Endothelial cell of umbilical vein (primary cell): ENCODE measurements at regions of chr17 and their contacts with region 1.

Region 1: GRCh38 chr17:64736804-64737492 is 74.8 kb upstream of the SMURF2 start:
- DNase-seq: peak; percentile 75
- H3K4me3 ChIP-seq: no peak overlapping the region
- H3K27ac ChIP-seq: no peak overlapping the region
- H3K4me1 ChIP-seq: peaks cover 42% of the 10 kb centered on the region
- H3K27me3 ChIP-seq: no peaks in the 10 kb centered on the region
- CTCF ChIP-seq: peak; percentile 66 to 71
- POLR2A ChIP-seq: no peak

Region 2: GRCh38 chr17:64506576-64507477 is 230.1 kb before region 1 on chr17 and contains the start of gene CEP95:
- CTCF ChIA-PET with region 1: no interaction called
- POLR2A ChIA-PET with region 1: interaction called, 3 read pairs
- dilution Hi-C with region 1: no loop called
- intact Hi-C with region 1: loop called (anchors 10 kb)
- DNase-seq: peak; percentile 96
- H3K4me3 ChIP-seq: peak within 1 kb of the TSS; percentile 65 to 97 (median 95)
- H3K27ac ChIP-seq: peak within 1 kb of the TSS; percentile 98
- H3K4me1 ChIP-seq: peaks cover 34% of the 10 kb centered on the region
- H3K27me3 ChIP-seq: no peaks in the 10 kb centered on the region
- CTCF ChIP-seq: no peak
- POLR2A ChIP-seq: peak; percentile 65
- total RNA-seq, gene CEP95: 35.5 and 42.6 TPM in 2 replicates

Region 3: DNA sequence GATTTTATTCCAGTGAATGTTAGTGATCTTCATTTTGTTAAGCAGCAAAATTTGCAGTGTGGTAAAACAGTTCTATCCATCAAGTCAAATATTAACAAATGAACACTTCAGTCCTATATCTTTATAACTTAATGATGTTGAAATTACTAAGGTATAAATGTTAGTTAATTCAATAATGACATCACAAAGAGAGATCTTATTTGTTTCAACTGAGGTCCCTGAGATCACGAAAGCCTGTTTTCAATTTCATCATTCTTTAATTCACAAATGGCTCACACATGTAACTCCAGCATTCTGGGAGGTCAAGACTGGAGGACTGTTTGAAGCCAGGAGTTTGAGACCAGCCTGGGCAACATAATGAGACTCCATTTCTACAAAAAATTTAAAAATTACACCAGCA is 88.7 kb before region 1 on chr17:
- CTCF ChIA-PET with region 1: interaction called, 16 read pairs
- POLR2A ChIA-PET with region 1: interaction called, 3 read pairs
- dilution Hi-C with region 1: no loop called
- intact Hi-C with region 1: loop called (anchors 1 kb)
- DNase-seq: no peak
- H3K4me3 ChIP-seq: no peak overlapping the region
- H3K27ac ChIP-seq: no peak overlapping the region
- H3K4me1 ChIP-seq: peaks cover 24% of the 10 kb centered on the region
- H3K27me3 ChIP-seq: no peaks in the 10 kb centered on the region
- CTCF ChIP-seq: no peak
- POLR2A ChIP-seq: no peak

Region 4: DNA sequence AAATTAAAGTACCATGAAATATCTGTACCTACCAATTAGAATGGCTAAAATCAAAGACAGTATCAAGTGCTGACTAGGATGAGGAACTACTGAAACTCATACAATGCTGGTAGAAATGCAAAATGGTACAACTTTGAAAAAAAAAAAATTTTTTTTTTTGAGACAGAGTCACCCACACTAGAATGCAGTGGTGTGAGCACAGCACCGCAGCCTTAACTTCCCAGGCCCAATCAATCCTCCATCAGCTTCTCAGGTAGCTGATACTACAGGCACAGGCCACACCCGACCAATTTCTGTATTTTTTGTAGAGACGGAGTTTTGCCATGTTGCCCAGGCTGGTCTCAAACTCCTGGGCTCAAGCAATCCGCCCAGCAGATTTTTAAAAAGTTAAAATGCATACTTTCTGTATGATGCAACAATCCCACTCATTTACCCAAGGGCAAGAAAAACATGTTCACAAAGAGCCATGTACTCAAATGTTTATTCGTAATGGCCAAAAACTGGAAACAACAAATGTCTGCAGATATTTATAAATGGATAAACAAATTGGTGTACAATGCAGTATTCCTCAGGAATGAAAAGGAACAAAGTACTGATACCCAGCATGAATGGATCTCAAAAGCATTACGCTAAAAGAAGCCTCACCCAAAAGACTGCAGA is 83.5 kb before region 1 on chr17:
- CTCF ChIA-PET with region 1: interaction called, 16 read pairs
- POLR2A ChIA-PET with region 1: interaction called, 3 read pairs
- dilution Hi-C with region 1: no loop called
- intact Hi-C with region 1: loop called (anchors 1 kb)
- DNase-seq: no peak
- H3K4me3 ChIP-seq: no peak overlapping the region
- H3K27ac ChIP-seq: peak overlapping the region; percentile 26
- H3K4me1 ChIP-seq: peaks cover 48% of the 10 kb centered on the region
- H3K27me3 ChIP-seq: no peaks in the 10 kb centered on the region
- CTCF ChIP-seq: no peak
- POLR2A ChIP-seq: no peak

Region 5: DNA sequence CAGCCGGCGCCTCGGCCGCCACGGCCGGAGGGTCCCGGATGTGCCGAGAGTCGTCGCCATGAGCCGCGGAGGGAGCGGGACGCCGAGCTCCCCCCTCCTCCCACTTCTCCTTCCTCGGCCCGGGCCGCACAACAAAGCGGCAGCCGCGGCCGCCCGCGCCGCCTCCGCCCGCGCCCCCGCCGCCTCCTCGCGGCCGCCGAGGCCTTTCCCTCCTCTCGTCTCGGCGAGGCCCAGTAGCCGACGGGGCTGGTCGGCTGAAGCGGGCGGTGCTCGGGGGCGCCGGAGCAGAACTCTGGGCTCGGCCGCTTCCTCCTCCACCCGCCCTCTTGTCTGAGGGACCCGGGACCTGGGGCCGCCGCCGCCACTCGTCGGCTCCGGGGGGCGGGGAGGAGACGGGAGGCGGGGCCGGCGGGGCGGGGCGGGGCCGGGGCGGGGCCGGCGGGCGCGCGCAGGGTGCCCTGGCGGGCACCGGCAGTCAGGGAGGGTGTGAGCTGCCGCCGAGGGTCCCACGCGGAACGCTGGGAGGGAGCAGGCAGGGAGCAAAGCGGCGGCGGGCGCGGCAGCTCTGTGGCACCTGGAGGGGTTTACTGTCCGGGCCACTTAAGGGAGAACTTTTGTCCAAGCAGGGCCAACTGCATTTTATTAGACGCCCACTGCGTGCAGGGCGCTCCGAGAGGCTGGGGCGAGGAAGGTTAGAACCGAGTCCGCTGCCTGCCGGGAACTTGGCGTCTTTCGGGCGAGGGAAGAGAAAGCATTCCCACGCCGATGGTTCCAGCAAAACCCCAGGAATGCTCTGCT is 74.8 kb before region 1 on chr17 and contains the start of gene SMURF2:
- CTCF ChIA-PET with region 1: interaction called, 8 read pairs
- POLR2A ChIA-PET with region 1: no interaction called
- dilution Hi-C with region 1: no loop called
- intact Hi-C with region 1: loop called (anchors 1 kb)
- DNase-seq: peak; percentile 68
- H3K4me3 ChIP-seq: peak within 1 kb of the TSS; percentile 92 to 97 (median 95)
- H3K27ac ChIP-seq: peak within 1 kb of the TSS; percentile 86
- H3K4me1 ChIP-seq: peaks cover 29% of the 10 kb centered on the region
- H3K27me3 ChIP-seq: no peaks in the 10 kb centered on the region
- CTCF ChIP-seq: no peak
- POLR2A ChIP-seq: peak; percentile 97
- total RNA-seq, gene SMURF2: 105 and 108 TPM in 2 replicates

Region 6: GRCh38 chr17:64687961-64688360 is 49.0 kb before region 1 on chr17:
- CTCF ChIA-PET with region 1: no interaction called
- POLR2A ChIA-PET with region 1: no interaction called
- dilution Hi-C with region 1: no loop called
- intact Hi-C with region 1: no loop called
- DNase-seq: no peak
- H3K4me3 ChIP-seq: no peak overlapping the region
- H3K27ac ChIP-seq: no peak overlapping the region
- H3K4me1 ChIP-seq: peaks cover 5% of the 10 kb centered on the region
- H3K27me3 ChIP-seq: no peaks in the 10 kb centered on the region
- CTCF ChIP-seq: no peak
- POLR2A ChIP-seq: no peak